Activated T-helper 1 cell treated with anti-CD3 and anti-CD28 coated beads, Interleukin-12 subunit alpha, Interleukin-12 subunit beta, Interleukin-2, Interleukin-4 antibody, amounts not matched to agents 30 ng/mL and 10 ng/mL and 1 ng/mL, durations not matched to agents 14 hours and 24 hours and 36 hours (primary cell): ENCODE measurements at regions of chr2 and their contacts with region 1.

Region 1: DNA sequence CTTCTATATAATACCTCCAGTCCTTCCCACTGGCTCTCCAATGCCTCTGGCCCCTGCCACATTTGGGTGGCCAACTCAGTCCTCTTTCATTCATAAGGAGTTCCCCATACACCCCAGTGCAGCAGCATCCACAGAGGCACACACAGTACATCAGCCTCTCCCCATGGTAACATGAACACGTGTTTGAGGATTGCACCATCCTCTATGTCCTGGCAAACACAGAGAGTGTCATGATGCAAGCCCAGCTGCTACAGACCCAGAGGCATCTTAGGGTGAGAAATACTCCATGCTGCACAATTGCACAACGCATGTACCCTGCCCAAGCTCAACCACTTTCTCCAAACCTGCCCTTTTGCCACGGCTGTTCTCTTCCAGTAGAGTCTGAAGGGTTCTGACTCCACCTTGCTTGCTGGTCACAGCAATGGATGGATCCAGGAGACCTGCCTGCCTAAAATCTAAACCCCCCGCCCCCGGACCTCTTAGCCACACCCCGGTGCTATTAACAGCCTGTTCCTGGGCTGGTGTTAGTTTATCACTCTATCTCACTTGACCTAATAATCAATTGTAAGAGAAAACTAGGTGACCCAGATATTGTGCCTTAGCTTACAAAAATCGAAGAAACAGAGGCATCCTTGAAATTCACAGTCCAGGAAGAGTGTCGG is 11.4 kb downstream of the IGFBP5 start:
- DNase-seq: no peak
- H3K4me3 Mint-ChIP-seq: no peak overlapping the region
- H3K27ac Mint-ChIP-seq: no peak overlapping the region
- H3K4me1 Mint-ChIP-seq: peaks cover 10% of the 10 kb centered on the region
- H3K27me3 Mint-ChIP-seq: peaks cover 15% of the 10 kb centered on the region

Region 2: GRCh38 chr2:215528555-215528954 is 1155.4 kb before region 1 on chr2:
- intact Hi-C with region 1: no loop called
- DNase-seq: no peak
- H3K4me3 Mint-ChIP-seq: no peak overlapping the region
- H3K27ac Mint-ChIP-seq: no peak overlapping the region
- H3K4me1 Mint-ChIP-seq: no peaks in the 10 kb centered on the region
- H3K27me3 Mint-ChIP-seq: no peaks in the 10 kb centered on the region

Region 3: GRCh38 chr2:216195565-216196029 is 488.4 kb before region 1 on chr2:
- intact Hi-C with region 1: no loop called
- DNase-seq: no peak
- H3K4me3 Mint-ChIP-seq: no peak overlapping the region
- H3K27ac Mint-ChIP-seq: peak overlapping the region; percentile 78
- H3K4me1 Mint-ChIP-seq: peaks cover 65% of the 10 kb centered on the region
- H3K27me3 Mint-ChIP-seq: no peaks in the 10 kb centered on the region

Region 4: DNA sequence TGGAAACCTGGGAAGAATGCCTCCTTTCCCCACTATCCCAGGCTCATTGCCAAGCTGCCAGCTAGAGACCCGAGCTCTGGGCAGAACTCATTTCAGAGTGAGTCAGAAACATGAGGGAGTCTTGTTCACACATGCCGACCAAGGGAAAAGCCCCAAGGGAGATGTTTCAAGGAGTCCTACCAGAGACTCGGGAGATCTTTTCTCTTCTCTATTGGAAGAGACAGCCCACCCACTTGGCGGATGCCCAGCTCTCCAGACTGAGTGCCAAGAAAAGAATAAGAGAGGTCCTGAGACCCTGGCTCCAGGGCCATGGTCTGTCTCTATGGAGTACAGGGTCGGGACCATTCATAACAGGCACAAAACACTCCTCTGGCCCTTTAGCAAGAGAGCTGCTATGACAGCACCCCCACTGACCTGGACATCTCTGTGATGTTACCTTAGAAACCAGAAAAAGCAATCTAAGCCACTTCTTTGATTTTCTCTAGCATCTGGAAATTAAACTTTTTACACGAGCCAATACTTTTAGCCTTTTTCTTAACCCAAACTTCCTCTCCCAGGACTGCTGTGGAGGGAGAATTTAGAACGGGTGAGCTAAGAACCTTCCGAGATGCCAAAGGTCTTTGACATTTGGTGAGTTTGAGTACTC is 29.8 kb after region 1 on chr2:
- intact Hi-C with region 1: no loop called
- DNase-seq: no peak
- H3K4me3 Mint-ChIP-seq: no peak overlapping the region
- H3K27ac Mint-ChIP-seq: no peak overlapping the region
- H3K4me1 Mint-ChIP-seq: no peaks in the 10 kb centered on the region
- H3K27me3 Mint-ChIP-seq: no peaks in the 10 kb centered on the region

Region 5: DNA sequence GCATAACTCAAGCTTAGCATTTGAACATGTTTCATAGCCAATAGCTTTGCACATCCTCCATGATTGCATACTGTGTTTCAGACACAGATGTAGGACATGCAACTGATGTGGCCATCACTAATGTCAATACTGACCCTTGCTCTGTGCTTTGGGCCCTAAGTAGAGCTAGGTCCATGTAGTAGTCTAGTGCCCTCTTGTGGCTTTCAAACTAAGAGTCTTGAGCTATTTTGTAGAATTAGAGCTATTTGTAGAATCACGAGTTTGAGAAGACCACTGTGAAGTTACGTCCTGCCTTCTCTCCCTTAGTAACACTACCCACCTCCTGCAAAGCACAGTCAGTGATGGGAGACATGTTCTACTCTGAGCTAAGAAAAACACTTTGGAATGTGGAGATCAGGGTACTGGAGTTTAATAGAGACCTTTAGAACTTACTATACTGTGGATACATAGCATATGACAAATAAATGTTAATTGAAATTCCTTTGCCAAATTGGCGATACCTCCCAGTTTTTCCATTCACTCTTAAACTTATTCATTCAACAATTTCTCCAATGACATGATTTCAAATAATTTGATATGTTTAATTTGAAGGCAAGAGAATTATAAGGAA is 482.4 kb after region 1 on chr2:
- intact Hi-C with region 1: loop called (anchors 1 kb)
- DNase-seq: no peak
- H3K4me3 Mint-ChIP-seq: no peak overlapping the region
- H3K27ac Mint-ChIP-seq: no peak overlapping the region
- H3K4me1 Mint-ChIP-seq: peaks cover 17% of the 10 kb centered on the region
- H3K27me3 Mint-ChIP-seq: peaks cover 2% of the 10 kb centered on the region

Region 6: DNA sequence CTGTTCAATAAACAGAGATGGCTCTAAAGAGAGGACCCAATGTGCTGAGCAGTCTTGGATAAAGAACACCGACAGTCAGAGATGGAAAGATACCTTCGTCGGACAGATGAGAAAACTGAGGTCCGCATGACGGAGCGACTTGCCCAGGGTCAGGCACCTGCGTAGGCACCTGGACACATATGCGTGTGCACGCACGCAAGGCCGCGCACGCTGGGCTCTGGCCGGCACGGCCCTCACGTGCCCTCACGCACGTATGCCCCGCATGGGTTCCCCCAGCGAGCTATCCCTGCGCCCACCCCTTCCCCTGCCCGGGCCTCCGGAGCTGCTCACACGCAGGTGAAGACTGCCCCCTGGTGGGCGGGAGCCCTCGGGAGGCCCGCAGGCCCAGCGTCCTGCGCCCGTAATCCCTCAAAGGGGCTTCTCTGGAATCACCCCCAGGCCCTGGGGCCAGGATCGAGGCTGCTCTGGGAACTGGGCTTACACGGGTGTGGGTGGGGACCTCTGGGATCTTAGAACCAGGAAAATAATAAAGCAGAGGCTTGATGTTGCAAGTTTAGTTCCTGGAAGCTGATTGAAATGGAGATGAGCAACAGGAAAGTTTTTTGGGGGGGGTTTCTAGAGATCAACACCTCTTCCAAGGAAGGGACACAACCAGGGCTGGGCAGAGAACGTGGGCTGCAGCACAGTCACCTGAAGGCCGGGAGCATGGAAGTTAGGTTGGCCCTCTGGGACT is 1072.6 kb after region 1 on chr2:
- intact Hi-C with region 1: loop called (anchors 2 kb)
- DNase-seq: peak; percentile 39
- H3K4me3 Mint-ChIP-seq: no peak overlapping the region
- H3K27ac Mint-ChIP-seq: peak overlapping the region; percentile 63
- H3K4me1 Mint-ChIP-seq: peaks cover 21% of the 10 kb centered on the region
- H3K27me3 Mint-ChIP-seq: peaks cover 2% of the 10 kb centered on the region